Heart left ventricle (tissue), 16 donors: ENCODE measurements at regions of chr10 and their contacts with region 1.

Region 1: GRCh38 chr10:15585303-15585715 is 134.4 kb downstream of the ITGA8 start:
- DNase-seq: peak; percentile 41 to 72 (median 51)
- ATAC-seq: peak in 3 of 4 donors; percentile 61 to 82 (median 73)
- H3K4me3 ChIP-seq: no peak overlapping the region
- H3K27ac ChIP-seq: no peak overlapping the region
- H3K4me1 ChIP-seq: peaks cover 0 to 8% (median 0%) of the 10 kb centered on the region in 12 donors
- H3K27me3 ChIP-seq: no peaks in the 10 kb centered on the region
- CTCF ChIP-seq: peak; percentile 50 to 87 (median 76)
- POLR2A ChIP-seq: no peak

Region 2: GRCh38 chr10:15433850-15434537 is 151.3 kb before region 1 on chr10:
- intact Hi-C with region 1: loop called in 3 of 10 experiments (anchors 5 to 10 kb)
- DNase-seq: peak in 2 of 5 donors; percentile 33 to 34
- ATAC-seq: peak; percentile 32 to 73 (median 63)
- H3K4me3 ChIP-seq: peak overlapping the region in 10 of 12 donors; percentile 25 to 57 (median 42)
- H3K27ac ChIP-seq: no peak overlapping the region
- H3K4me1 ChIP-seq: peaks cover 0 to 7% (median 2%) of the 10 kb centered on the region in 12 donors
- H3K27me3 ChIP-seq: no peaks in the 10 kb centered on the region
- CTCF ChIP-seq: peak; percentile 63 to 82 (median 74)
- POLR2A ChIP-seq: no peak

Region 3: GRCh38 chr10:15624401-15625196 is 39.3 kb after region 1 on chr10:
- intact Hi-C with region 1: loop called in 1 of 10 experiments (anchors 5 kb)
- DNase-seq: no peak
- ATAC-seq: peak; percentile 36 to 61 (median 50)
- H3K4me3 ChIP-seq: no peak overlapping the region
- H3K27ac ChIP-seq: peak overlapping the region in 4 of 12 donors; percentile 4 to 24 (median 17)
- H3K4me1 ChIP-seq: peaks cover 0 to 34% (median 0%) of the 10 kb centered on the region in 12 donors
- H3K27me3 ChIP-seq: no peaks in the 10 kb centered on the region
- CTCF ChIP-seq: no peak
- POLR2A ChIP-seq: no peak

Region 4: GRCh38 chr10:15712883-15713282 is 127.6 kb after region 1 on chr10:
- intact Hi-C with region 1: loop called in 9 of 10 experiments (anchors 5 kb)
- DNase-seq: no peak
- ATAC-seq: no peak
- H3K4me3 ChIP-seq: no peak overlapping the region
- H3K27ac ChIP-seq: no peak overlapping the region
- H3K4me1 ChIP-seq: peaks cover 0 to 3% (median 0%) of the 10 kb centered on the region in 12 donors
- H3K27me3 ChIP-seq: peaks cover 0 to 4% (median 0%) of the 10 kb centered on the region in 9 donors
- CTCF ChIP-seq: no peak
- POLR2A ChIP-seq: no peak

Region 5: DNA sequence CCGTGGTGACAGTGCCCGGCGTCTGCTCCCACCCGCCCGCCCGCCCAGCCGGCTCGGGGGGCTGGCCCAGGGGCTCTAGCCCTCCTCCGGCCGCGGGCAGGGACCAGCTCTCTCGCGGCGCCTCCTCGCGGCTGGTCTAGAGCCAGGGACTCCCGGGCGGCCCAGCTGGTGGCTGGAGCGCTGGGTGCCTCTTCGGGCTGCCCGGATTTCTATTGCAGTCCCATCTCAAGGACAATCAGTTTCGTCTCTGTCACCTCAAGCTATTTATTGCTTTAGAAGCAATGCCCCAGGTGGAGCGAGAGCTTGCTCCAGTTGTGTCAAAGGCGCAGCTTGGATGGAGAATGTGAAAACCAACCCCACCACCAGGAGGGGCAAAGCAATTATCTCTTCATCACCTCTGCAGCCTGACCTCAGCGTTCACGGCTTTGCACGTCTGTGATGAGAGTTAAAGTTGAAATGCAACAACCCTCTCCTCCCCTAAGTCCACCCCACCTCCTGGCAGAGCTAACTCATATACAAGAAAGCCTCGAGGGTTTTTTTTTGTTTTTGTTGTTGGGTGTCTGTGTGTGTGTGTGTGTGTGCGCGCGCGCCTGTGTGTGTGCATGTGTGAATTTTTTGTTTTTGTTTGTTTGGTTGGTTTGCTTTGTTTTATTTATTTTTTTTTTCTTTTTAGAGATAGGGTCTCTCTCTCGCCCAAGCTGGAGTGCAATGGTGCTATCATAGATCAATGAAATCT is 134.8 kb after region 1 on chr10 and contains the start of gene ITGA8:
- intact Hi-C with region 1: loop called in 9 of 10 experiments (anchors 5 kb)
- DNase-seq: peak in 4 of 5 donors; percentile 28 to 66 (median 32)
- ATAC-seq: peak in 3 of 4 donors; percentile 62 to 72 (median 70)
- H3K4me3 ChIP-seq: peak within 1 kb of the TSS; percentile 32 to 74 (median 50)
- H3K27ac ChIP-seq: peak within 1 kb of the TSS in 3 of 12 donors; percentile 6 to 68 (median 49)
- H3K4me1 ChIP-seq: peaks cover 0 to 19% (median 5%) of the 10 kb centered on the region in 12 donors
- H3K27me3 ChIP-seq: peaks cover 8 to 44% (median 26%) of the 10 kb centered on the region in 9 donors
- CTCF ChIP-seq: peak in 10 of 12 donors; percentile 19 to 56 (median 32)
- POLR2A ChIP-seq: no peak
- total RNA-seq, gene ITGA8: 0.50 to 4.3 (median 1.5) TPM

Region 6: DNA sequence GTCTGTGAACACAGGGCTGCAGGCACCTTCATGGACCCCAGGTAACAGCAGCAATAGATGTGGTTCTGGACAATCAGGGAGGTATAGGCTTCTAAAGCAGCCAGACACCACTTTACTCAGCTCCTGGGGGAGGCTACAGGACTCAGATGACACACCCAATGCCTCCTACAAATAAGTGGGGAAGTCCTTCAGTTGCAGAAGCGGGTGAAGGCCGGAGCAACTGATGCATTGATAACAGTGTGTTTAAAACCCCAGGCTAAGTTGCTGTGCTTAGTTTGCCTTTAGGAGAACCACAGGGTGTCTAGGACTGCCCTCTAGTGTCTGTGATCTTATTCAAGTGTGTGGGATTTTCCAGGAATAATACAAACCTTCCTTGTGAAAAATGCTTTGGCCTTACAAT is 140.3 kb after region 1 on chr10:
- intact Hi-C with region 1: loop called in 2 of 10 experiments (anchors 5 kb)
- DNase-seq: no peak
- ATAC-seq: peak in 3 of 4 donors; percentile 51 to 69 (median 68)
- H3K4me3 ChIP-seq: no peak overlapping the region
- H3K27ac ChIP-seq: no peak overlapping the region
- H3K4me1 ChIP-seq: peaks cover 0 to 10% (median 0%) of the 10 kb centered on the region in 12 donors
- H3K27me3 ChIP-seq: peaks cover 0 to 14% (median 0%) of the 10 kb centered on the region in 9 donors
- CTCF ChIP-seq: peak; percentile 25 to 69 (median 56)
- POLR2A ChIP-seq: no peak

Region 7: DNA sequence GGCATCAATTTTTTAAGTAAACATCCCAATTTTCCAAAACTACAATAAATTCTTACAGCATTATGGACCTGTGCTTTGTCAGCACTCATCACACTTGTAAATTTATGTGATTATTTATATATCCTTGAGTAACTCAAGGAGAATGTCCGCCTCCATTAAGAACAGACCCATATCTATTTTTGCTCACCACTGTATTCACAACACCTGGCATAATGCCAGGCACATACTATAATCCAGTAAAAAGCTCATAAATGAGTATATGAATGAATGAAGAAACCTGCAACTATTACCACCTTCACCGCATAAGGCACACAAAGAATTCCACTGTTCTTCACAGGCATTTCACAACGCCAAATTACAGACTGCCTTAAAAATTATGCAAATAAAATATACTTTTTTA is 228.1 kb after region 1 on chr10:
- intact Hi-C with region 1: loop called in 1 of 10 experiments (anchors 10 kb)
- DNase-seq: no peak
- ATAC-seq: peak in 2 of 4 donors; percentile 24 to 36
- H3K4me3 ChIP-seq: no peak overlapping the region
- H3K27ac ChIP-seq: no peak overlapping the region
- H3K4me1 ChIP-seq: peaks cover 0 to 31% (median 5%) of the 10 kb centered on the region in 12 donors
- H3K27me3 ChIP-seq: no peaks in the 10 kb centered on the region
- CTCF ChIP-seq: no peak
- POLR2A ChIP-seq: no peak